ENCODE measurements at regions of chr7 and their contacts with region 1.

Region 1: DNA sequence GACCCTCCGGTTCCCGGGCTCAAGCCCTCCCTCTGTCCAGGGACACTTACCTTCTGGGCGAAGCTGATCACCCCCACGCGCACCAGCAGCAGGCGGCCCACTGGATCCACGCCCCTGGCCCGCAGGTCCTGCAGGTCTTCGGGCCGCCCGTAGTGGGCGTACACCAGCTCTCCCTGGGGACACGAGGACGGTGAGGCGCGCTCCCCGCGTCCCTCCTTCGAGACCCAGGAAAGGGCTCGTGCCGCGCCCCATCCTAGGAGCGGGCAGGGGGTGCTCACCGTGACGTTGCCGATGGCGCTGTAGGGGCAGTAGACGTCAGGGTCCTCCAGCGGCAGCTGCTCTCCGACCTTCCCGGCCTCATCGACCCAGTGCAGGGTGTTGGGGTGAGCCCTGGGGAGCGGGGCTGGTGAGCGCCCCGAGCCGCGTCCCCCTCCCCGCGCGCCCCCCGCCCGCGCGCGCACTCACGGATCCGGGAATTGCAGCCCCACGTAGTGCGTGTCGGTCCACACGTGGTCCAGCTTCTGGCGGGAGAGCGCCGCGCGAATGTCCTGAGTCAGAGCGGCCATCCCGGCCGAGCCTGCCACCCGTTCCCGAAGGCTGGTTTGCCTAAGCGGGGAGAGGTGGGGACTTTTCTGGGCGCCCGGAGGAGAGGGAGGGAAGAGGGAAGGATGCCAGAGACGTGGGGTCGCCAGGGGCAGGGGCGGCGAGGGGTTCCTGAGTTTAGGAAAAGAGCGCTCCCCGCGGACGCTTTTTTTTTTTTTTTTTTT is 8.2 kb downstream of the TFR2 start:
- DNase-seq: no peak
- ATAC-seq: peak; percentile 84
- H3K4me3 ChIP-seq: peak overlapping the region; percentile 76
- H3K27ac ChIP-seq: peak overlapping the region; percentile 24; the same call in 1 of the 2 replicates
- H3K4me1 ChIP-seq: peaks cover 6% of the 10 kb centered on the region
- H3K27me3 ChIP-seq: no peaks in the 10 kb centered on the region; a peak in 1 of 4 replicates
- CTCF ChIP-seq: peak; percentile 47 to 64 (median 48)
- EP300 ChIP-seq: no peak
- POLR2A ChIP-seq: peak; percentile 70
- RAD21 ChIP-seq: no peak

Region 2: DNA sequence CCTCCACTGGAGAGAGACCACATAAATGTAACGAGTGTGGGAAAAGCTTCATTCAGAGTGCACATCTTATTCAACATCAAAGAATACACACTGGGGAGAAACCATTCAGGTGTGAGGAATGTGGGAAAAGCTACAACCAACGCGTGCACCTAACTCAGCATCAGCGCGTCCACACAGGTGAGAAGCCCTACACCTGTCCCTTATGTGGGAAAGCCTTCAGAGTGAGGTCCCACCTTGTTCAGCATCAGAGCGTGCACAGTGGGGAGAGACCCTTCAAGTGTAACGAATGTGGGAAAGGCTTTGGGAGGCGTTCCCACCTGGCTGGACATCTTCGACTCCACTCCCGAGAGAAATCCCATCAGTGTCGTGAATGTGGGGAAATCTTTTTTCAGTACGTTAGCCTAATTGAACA is 1101.8 kb before region 1 on chr7:
- CTCF ChIA-PET with region 1: no interaction called
- POLR2A ChIA-PET with region 1: interaction called, 10 read pairs
- RAD21 ChIA-PET with region 1: no interaction called
- SMC1A ChIA-PET with region 1: no interaction called
- in situ Hi-C with region 1: no loop called
- intact Hi-C with region 1: no loop called
- DNase-seq: no peak
- ATAC-seq: no peak
- H3K4me3 ChIP-seq: no peak overlapping the region
- H3K27ac ChIP-seq: no peak overlapping the region
- H3K4me1 ChIP-seq: no peaks in the 10 kb centered on the region
- H3K27me3 ChIP-seq: no peaks in the 10 kb centered on the region
- CTCF ChIP-seq: no peak
- EP300 ChIP-seq: no peak
- POLR2A ChIP-seq: no peak
- RAD21 ChIP-seq: no peak

Region 3: DNA sequence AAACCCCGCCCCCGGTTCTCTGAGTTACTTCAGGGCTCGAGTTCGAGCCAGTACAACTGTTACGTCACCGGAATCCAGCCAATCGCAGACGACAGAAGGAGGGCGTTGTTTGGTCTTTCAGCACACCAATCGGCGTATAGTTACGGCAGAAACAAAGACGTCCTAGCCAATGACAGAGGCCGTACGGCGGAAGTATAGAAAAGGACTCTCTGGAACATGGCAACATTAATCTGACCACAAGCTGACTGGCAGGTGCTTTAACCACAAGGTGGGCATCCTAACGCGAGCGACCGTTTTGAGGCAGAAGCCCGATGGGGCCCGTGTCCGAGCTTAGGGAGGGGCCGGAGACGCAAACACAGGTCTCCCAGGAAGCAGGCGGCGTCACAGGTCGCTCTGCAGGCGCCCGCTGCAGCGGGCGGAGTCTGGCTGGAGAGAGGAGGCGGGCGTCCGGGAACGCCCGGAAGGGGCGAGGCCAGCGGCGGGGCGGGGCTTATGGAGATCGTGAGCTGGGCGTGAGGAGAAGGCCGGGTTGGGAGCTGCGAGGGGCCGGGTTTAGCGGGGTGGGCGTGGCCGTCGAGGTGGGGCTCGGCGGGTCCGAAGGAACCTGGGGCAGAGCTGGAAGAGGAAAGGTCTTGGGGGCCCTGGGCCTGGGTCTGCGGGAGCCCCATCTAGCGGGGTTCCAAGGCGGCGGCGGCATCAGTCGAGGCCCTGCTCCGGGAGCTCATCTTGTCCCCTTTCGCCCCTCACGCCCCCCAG is 21.0 kb before region 1 on chr7 and contains the start of gene MOSPD3:
- CTCF ChIA-PET with region 1: interaction called, 28 read pairs
- POLR2A ChIA-PET with region 1: no interaction called
- RAD21 ChIA-PET with region 1: interaction called, 3 read pairs
- SMC1A ChIA-PET with region 1: no interaction called
- in situ Hi-C with region 1: no loop called
- intact Hi-C with region 1: no loop called
- DNase-seq: peak; percentile 99
- ATAC-seq: peak; percentile 98
- H3K4me3 ChIP-seq: peak within 1 kb of the TSS; percentile 75
- H3K27ac ChIP-seq: peak within 1 kb of the TSS; percentile 97
- H3K4me1 ChIP-seq: peaks cover 5% of the 10 kb centered on the region
- H3K27me3 ChIP-seq: peaks cover 0 to 3% of the 10 kb centered on the region in 2 experiments; a peak in 2 of 4 replicates
- CTCF ChIP-seq: no peak
- EP300 ChIP-seq: no peak
- POLR2A ChIP-seq: peak; percentile 90
- RAD21 ChIP-seq: no peak
- polyA plus RNA-seq, gene MOSPD3: 0.61 to 1.2 TPM

Region 4: DNA sequence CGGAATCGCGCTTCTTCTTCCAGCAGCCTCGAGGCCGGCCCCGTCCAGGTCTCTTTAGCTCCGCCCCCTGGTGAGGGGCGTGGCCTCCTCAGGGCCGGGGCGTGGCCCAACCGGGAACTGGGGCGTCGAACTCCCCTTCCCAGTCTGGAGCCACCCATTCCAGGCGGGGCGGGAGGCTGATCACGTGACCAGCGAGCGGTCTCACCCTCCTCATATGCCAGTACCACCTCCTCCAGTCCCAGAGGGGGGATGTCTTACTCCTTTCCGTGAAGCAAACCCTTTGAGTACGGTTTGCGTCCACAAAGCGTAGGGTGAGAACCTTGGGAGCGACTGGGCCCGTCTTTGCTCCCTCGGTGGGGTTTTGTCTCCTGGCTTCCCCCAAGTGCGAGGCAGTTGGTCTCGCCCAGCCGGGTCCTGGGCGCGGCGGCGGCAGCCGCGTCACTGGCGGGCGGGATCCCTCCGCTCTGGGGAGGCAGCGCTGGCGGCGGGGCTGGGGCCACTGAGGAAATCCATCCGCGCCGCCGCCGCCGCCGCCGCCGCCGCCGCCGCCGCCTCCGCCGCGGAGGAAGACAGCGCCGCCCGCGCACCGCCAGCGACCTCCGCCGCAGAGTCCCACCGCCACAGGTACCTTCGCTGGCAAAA is 40.3 kb after region 1 on chr7 and contains the start of gene GNB2:
- CTCF ChIA-PET with region 1: interaction called, 3 read pairs
- POLR2A ChIA-PET with region 1: no interaction called
- RAD21 ChIA-PET with region 1: no interaction called
- SMC1A ChIA-PET with region 1: interaction called, 4 read pairs
- in situ Hi-C with region 1: no loop called
- intact Hi-C with region 1: loop called (anchors 1 kb)
- DNase-seq: peak; percentile 95
- ATAC-seq: peak; percentile 72
- H3K4me3 ChIP-seq: peak within 1 kb of the TSS; percentile 98
- H3K27ac ChIP-seq: peak within 1 kb of the TSS; percentile 92
- H3K4me1 ChIP-seq: no peaks in the 10 kb centered on the region; the same call in 1 of the 2 replicates
- H3K27me3 ChIP-seq: no peaks in the 10 kb centered on the region
- CTCF ChIP-seq: no peak
- EP300 ChIP-seq: 0 out of 4 replicates have a peak, but pooled peaks of 1 of the 2 experiments have one; percentile 37
- POLR2A ChIP-seq: peak; percentile 75
- RAD21 ChIP-seq: no peak
- polyA plus RNA-seq, gene GNB2: 0.35 to 4.7 TPM